ENCODE measurements at regions of chr11 and their contacts with region 1.

Region 1: DNA sequence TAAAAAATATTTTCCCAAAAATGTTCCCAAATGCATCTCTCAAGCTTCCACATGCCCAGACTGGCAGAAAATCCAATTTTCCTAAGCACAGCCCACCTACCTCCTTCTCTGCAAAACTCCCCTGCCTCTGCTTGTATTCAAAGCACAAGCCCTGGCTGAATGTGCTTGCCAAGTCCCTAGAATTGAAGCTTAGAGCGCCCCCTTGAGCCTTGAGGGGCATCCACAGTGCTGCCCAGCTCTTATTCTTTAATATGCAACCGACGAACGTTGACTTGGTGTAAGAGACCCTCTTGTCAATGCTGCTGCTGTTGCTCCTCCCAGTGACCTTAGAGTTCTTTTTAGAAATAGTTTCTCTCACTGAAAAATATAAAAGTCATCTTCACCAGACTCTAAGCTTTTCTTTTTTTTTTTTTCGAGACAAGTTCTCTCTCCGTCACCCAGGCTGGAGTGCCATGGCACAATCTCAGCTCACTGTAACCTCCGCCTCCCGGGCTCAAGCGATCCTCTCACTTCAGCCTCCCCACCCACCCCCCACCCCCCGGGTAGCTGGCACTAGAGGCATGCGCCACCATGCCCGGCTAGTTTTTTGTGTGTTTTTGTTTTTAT is 63.5 kb upstream of the CAPRIN1 start:
- H3K4me3 Mint-ChIP-seq: no peak overlapping the region
- H3K27ac Mint-ChIP-seq: no peak overlapping the region
- H3K4me1 Mint-ChIP-seq: no peaks in the 10 kb centered on the region
- H3K27me3 Mint-ChIP-seq: peaks cover 3% of the 10 kb centered on the region

Region 2: DNA sequence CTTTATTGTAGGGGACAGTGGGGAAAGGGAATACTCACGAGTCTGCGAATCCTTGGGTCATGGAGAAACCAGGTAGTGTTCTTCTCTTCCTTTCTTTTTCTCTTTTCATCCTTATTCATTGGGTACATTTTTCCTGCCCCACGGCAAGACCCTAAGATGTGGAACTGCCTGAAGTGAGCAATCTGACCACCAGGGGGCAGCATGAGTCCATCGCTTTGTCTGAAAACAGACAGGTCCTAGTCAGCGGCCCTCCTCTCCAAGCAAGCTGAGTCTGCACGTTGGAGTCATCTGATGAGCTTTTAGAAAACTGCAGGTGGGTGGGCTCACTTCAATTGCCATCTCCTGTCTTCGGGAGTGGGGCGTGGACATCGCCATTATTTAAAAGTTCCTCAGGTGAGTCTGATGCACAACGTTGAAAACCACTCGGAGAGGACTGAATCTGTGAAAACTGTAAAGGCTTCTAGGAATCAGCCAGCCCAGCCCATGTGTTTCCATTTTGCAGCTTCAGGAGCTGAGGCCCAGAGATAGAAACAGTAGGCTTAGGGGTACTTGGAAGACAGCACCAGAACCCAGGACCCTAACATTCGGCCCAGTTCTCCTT is 179.8 kb before region 1 on chr11:
- intact Hi-C with region 1: loop called (anchors 1 kb)
- H3K4me3 Mint-ChIP-seq: no peak overlapping the region
- H3K27ac Mint-ChIP-seq: no peak overlapping the region
- H3K4me1 Mint-ChIP-seq: peaks cover 5% of the 10 kb centered on the region
- H3K27me3 Mint-ChIP-seq: peaks cover 17% of the 10 kb centered on the region

Region 3: DNA sequence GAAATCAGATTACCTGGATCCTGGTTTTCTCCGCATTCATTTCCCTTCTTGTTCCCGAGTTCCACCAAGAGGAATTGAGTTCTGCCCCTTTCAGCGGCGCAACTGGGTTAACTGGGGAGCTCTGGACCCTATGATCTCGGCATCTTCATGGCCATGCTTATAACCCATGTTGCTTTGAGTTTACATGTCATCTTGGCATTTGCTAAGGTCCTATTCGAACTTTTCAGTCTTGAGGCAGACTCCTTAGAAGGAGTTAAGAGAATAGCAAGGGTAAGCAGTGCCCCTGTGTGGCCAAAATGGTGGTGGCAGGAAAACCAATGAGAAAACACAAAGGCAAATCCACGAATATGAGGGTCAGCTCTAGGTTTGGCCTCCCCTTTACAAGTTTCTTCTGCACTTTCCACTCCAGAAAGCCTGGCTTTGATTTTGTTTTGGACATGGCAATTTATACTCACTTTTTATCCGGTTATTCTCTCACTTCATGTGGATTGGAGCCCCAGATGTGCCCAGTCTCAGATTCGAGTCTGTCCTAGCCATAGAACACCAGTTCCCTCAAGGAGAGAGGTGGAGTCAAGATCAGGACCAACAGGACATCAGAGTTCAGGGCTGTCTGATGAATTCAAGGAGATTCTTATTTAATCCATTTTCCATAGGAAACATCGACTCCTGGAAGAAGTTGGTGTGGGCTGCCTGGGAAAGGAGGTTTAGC is 158.5 kb before region 1 on chr11:
- intact Hi-C with region 1: loop called (anchors 1 kb)
- H3K4me3 Mint-ChIP-seq: peak overlapping the region; percentile 71
- H3K27ac Mint-ChIP-seq: no peak overlapping the region
- H3K4me1 Mint-ChIP-seq: peaks cover 13% of the 10 kb centered on the region
- H3K27me3 Mint-ChIP-seq: peaks cover 54% of the 10 kb centered on the region

Region 4: GRCh38 chr11:33857933-33858371 is 130.1 kb before region 1 on chr11:
- intact Hi-C with region 1: loop called (anchors 5 kb)
- H3K4me3 Mint-ChIP-seq: no peak overlapping the region
- H3K27ac Mint-ChIP-seq: no peak overlapping the region
- H3K4me1 Mint-ChIP-seq: peaks cover 30% of the 10 kb centered on the region
- H3K27me3 Mint-ChIP-seq: no peaks in the 10 kb centered on the region